ENCODE measurements at regions of chr17 and their contacts with region 1.

Region 1: DNA sequence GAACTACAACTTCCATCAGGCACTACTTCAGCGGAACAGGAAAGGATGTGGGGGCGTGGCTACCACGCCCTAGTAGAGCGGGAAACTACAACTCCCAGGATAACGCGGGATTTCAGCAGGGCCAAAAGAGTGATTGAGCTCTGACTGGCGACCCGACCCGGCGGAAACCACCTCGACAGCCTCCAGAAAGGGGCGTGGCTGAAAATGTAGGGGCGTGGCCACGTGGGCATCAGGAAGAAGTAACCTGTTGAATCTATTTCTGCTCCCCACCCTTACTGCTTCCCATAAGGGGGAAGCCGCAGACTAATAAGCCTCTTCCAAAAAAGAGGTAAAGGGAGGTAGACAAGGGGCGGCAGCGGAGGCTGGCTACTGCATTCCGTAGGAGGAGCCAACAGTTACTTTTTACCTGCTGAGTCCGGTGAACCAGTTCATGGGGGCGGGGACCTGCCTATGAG is at the start of gene TMEM102:
- DNase-seq: peak; percentile 98 to 100 (median 99)
- H3K4me3 ChIP-seq: peak within 1 kb of the TSS; percentile 62 to 95 (median 86)
- H3K27ac ChIP-seq: peak within 1 kb of the TSS; percentile 25 to 55
- H3K4me1 ChIP-seq: peaks cover 0 to 49% (median 45%) of the 10 kb centered on the region in 4 experiments
- H3K27me3 ChIP-seq: peaks cover 0 to 25% (median 9%) of the 10 kb centered on the region in 5 experiments

Region 2: GRCh38 chr17:7351665-7352501 is 83.4 kb before region 1 on chr17 and contains the start of gene KCTD11:
- CTCF ChIA-PET with region 1: interaction called, 28 read pairs
- POLR2A ChIA-PET with region 1: no interaction called
- DNase-seq: peak in 2 of 3 donors; percentile 26 to 57
- H3K4me3 ChIP-seq: peak within 1 kb of the TSS in 6 of 7 experiments; percentile 52 to 85 (median 74)
- H3K27ac ChIP-seq: peak within 1 kb of the TSS in 1 of 2 experiments; percentile 49
- H3K4me1 ChIP-seq: peaks cover 0 to 35% (median 14%) of the 10 kb centered on the region in 4 experiments
- H3K27me3 ChIP-seq: no peaks in the 10 kb centered on the region

Region 3: DNA sequence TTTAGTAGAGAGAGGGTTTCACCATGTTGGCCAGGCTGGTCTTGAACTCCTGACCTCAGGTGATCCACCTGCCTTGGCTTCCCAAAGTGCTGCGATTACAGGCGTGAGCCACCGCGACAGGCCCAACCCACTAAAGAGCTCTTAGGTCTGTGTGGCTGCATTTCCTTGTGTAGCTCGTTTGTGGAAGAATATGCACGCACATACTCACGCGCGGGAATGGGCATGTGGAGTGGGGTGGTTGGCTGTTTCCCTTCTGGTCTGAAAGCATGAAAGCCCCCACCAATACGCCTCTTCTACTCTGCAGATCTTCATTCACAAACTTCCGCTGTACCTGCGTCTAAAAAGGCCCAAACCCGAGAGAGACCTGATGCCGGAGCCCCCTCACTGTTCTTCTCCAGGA is 19.7 kb after region 1 on chr17:
- CTCF ChIA-PET with region 1: interaction called, 40 read pairs
- POLR2A ChIA-PET with region 1: no interaction called
- DNase-seq: no peak
- H3K4me3 ChIP-seq: peak overlapping the region in 5 of 7 experiments; percentile 87 to 99 (median 95)
- H3K27ac ChIP-seq: no peak overlapping the region
- H3K4me1 ChIP-seq: peaks cover 0 to 17% (median 9%) of the 10 kb centered on the region in 4 experiments
- H3K27me3 ChIP-seq: no peaks in the 10 kb centered on the region

Region 4: GRCh38 chr17:7478276-7479153 is 43.3 kb after region 1 on chr17:
- CTCF ChIA-PET with region 1: interaction called, 29 read pairs
- POLR2A ChIA-PET with region 1: interaction called, 28 read pairs
- DNase-seq: peak; percentile 31 to 76 (median 65)
- H3K4me3 ChIP-seq: peak overlapping the region; percentile 65 to 88 (median 79)
- H3K27ac ChIP-seq: peak overlapping the region; percentile 66 to 87
- H3K4me1 ChIP-seq: peaks cover 0 to 55% (median 51%) of the 10 kb centered on the region in 4 experiments
- H3K27me3 ChIP-seq: no peaks in the 10 kb centered on the region

Region 5: GRCh38 chr17:7484067-7484918 is 49.0 kb after region 1 on chr17 and contains the start of gene POLR2A:
- CTCF ChIA-PET with region 1: interaction called, 27 read pairs
- POLR2A ChIA-PET with region 1: interaction called, 28 read pairs
- DNase-seq: peak; percentile 97 to 99 (median 98)
- H3K4me3 ChIP-seq: peak within 1 kb of the TSS; percentile 59 to 97 (median 84)
- H3K27ac ChIP-seq: peak within 1 kb of the TSS; percentile 99 to 100
- H3K4me1 ChIP-seq: peaks cover 12 to 60% (median 46%) of the 10 kb centered on the region in 4 experiments
- H3K27me3 ChIP-seq: no peaks in the 10 kb centered on the region

Region 6: GRCh38 chr17:7496470-7497183 is 61.4 kb after region 1 on chr17:
- CTCF ChIA-PET with region 1: interaction called, 10 read pairs
- POLR2A ChIA-PET with region 1: interaction called, 3 read pairs
- DNase-seq: no peak
- H3K4me3 ChIP-seq: no peak overlapping the region
- H3K27ac ChIP-seq: no peak overlapping the region
- H3K4me1 ChIP-seq: no peaks in the 10 kb centered on the region
- H3K27me3 ChIP-seq: no peaks in the 10 kb centered on the region

Measured in common myeloid progenitor, CD34-positive (primary cell).